Transverse colon (tissue), 4 donors: ENCODE measurements at regions of chr7 and their contacts with region 1.

Region 1: GRCh38 chr7:76020031-76020714 is 25.8 kb upstream of the TMEM120A start:
- DNase-seq: peak; percentile 83
- H3K4me3 ChIP-seq: no peak overlapping the region
- H3K27ac ChIP-seq: no peak overlapping the region
- H3K4me1 ChIP-seq: peaks cover 0 to 4% (median 1%) of the 10 kb centered on the region in 4 donors
- H3K27me3 ChIP-seq: no peaks in the 10 kb centered on the region
- CTCF ChIP-seq: peak; percentile 75 to 92 (median 90)
- EP300 ChIP-seq: no peak
- POLR2A ChIP-seq: no peak

Region 2: DNA sequence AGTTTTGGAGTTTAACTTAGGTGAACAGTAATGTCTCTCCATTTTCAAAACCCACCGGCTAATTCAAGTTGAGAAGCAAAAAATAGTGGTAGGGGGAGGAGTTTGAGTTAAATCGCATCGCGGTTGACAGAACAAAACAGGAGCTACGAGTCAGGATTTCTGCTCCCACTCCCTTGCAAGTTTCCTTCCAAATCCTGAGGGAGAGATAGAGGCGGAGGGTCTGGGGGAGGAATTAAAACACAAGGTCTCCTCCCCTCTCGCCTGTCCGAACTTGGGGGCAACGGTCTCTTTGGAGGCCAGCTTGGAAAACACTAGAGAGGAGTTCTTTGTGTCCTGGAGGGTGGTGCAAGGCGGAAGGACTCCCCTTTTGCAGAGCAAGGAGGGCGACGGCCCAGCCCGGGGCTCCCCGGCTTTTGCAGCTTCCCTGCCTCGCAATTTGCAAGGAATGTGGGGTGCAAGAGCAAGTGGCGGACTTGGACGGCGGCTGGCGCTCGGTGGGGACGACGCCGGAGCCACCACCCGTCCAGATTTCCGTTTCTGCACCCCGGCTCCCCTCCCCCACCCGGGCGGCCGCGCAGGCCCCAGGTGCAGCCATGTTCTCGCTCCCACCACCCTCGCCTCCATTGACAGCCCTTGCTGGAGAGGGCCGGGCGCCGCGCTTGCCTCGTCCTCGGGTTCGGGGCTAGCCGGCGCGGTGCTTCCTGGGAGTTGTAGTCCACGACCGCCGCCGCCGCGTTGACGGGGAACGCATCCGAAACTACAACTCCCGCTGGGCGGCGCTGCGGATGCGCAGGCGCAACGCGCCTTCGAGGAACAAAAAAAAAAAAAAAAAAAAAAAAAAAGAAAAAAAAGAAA is 1363.1 kb before region 1 on chr7:
- in situ Hi-C with region 1: no loop called
- intact Hi-C with region 1: loop called (anchors 5 kb)
- DNase-seq: peak; percentile 99
- H3K4me3 ChIP-seq: peak overlapping the region; percentile 54 to 99 (median 98)
- H3K27ac ChIP-seq: peak overlapping the region; percentile 99 to 100 (median 100)
- H3K4me1 ChIP-seq: peaks cover 21 to 42% (median 40%) of the 10 kb centered on the region in 4 donors
- H3K27me3 ChIP-seq: no peaks in the 10 kb centered on the region
- CTCF ChIP-seq: peak in 2 of 5 experiments; percentile 14 to 22
- EP300 ChIP-seq: no peak
- POLR2A ChIP-seq: peak; percentile 79

Region 3: GRCh38 chr7:75866489-75867389 is 153.4 kb before region 1 on chr7:
- in situ Hi-C with region 1: loop called (anchors 5 to 10 kb)
- intact Hi-C with region 1: loop called (anchors 2 kb)
- DNase-seq: peak; percentile 54
- H3K4me3 ChIP-seq: no peak overlapping the region
- H3K27ac ChIP-seq: no peak overlapping the region
- H3K4me1 ChIP-seq: peaks cover 0 to 9% (median 0%) of the 10 kb centered on the region in 4 donors
- H3K27me3 ChIP-seq: no peaks in the 10 kb centered on the region
- CTCF ChIP-seq: peak; percentile 87 to 95 (median 91)
- EP300 ChIP-seq: no peak
- POLR2A ChIP-seq: no peak